ENCODE measurements at regions of chr18 and their contacts with region 1.

Region 1: GRCh38 chr18:21109936-21110663 is 1.5 kb downstream of the ROCK1 start:
- DNase-seq: no peak
- ATAC-seq: no peak

Region 2: GRCh38 chr18:21012308-21012707 is 97.8 kb before region 1 on chr18:
- intact Hi-C with region 1: no loop called
- DNase-seq: no peak
- ATAC-seq: no peak

Region 3: GRCh38 chr18:21038201-21038600 is 71.9 kb before region 1 on chr18:
- intact Hi-C with region 1: no loop called
- DNase-seq: no peak
- ATAC-seq: no peak

Region 4: GRCh38 chr18:21053127-21053526 is 57.0 kb before region 1 on chr18:
- intact Hi-C with region 1: loop called in 1 of 2 experiments (anchors 5 kb)
- DNase-seq: no peak
- ATAC-seq: peak; percentile 78 to 94

Region 5: DNA sequence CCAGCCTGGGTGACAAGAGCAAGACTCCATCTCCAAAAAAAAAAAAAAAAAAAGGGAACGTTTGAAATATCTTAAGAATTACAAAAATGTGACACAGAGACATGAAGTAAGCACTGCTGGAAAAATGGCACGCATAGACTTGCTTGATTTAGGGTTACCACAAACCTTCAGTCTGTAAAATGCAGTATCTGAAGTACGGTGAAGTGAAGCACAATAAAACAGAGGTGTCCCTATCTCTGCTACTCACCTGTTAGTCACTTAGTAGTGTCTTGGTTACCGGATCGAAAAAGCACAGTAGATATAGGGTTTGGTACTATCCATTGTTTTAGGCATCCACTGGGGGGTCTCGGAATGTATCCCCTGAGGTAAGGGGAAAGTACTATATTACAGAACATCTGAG is 120.3 kb after region 1 on chr18:
- intact Hi-C with region 1: no loop called
- DNase-seq: no peak
- ATAC-seq: no peak